Activated CD8-positive, alpha-beta T cell treated with anti-CD3 and anti-CD28 coated beads for 36 hours (primary cell): ENCODE measurements at regions of chr17 and their contacts with region 1.

Region 1: GRCh38 chr17:5065227-5065744 is 13.0 kb upstream of the ZFP3 start:
- DNase-seq: no peak
- ATAC-seq: no peak
- H3K4me3 Mint-ChIP-seq: no peak overlapping the region
- H3K27ac Mint-ChIP-seq: no peak overlapping the region
- H3K4me1 Mint-ChIP-seq: peaks cover 4% of the 10 kb centered on the region
- H3K27me3 Mint-ChIP-seq: no peaks in the 10 kb centered on the region
- CTCF ChIP-seq: no peak

Region 2: GRCh38 chr17:4903051-4903818 is 162.1 kb before region 1 on chr17 and contains the start of gene CHRNE:
- CTCF ChIA-PET with region 1: interaction called, 3 read pairs
- POLR2A ChIA-PET with region 1: no interaction called
- intact Hi-C with region 1: loop called (anchors 10 kb)
- DNase-seq: peak; percentile 91
- ATAC-seq: peak; percentile 52
- H3K4me3 Mint-ChIP-seq: peak within 1 kb of the TSS; percentile 34
- H3K27ac Mint-ChIP-seq: peak within 1 kb of the TSS; percentile 75
- H3K4me1 Mint-ChIP-seq: peaks cover 34% of the 10 kb centered on the region
- H3K27me3 Mint-ChIP-seq: no peaks in the 10 kb centered on the region
- CTCF ChIP-seq: peak; percentile 95
- total RNA-seq, gene CHRNE: 0.45 to 0.78 TPM

Region 3: DNA sequence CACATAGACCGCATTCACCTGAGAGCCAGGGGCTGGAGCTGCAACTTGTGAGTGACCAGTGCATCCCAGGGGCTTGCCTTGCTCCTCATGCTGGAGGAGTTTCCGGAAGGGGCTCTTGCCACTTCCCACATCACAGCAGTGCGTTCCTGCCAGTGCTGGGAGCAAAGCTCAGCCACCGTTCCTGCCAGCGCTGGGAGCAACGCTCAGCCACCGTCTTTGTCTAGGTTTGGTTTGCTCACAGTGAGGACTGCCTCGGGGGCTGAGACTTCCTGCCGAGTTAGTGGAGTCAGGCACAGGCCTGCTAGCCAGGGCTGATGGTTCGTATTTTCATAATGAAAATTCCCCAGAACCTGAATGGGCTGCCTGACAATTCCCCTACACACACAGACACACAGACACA is 157.0 kb before region 1 on chr17:
- CTCF ChIA-PET with region 1: interaction called, 11 read pairs
- POLR2A ChIA-PET with region 1: no interaction called
- intact Hi-C with region 1: loop called (anchors 10 kb)
- DNase-seq: peak; percentile 31
- ATAC-seq: peak; percentile 11
- H3K4me3 Mint-ChIP-seq: no peak overlapping the region
- H3K27ac Mint-ChIP-seq: no peak overlapping the region
- H3K4me1 Mint-ChIP-seq: peaks cover 12% of the 10 kb centered on the region
- H3K27me3 Mint-ChIP-seq: no peaks in the 10 kb centered on the region
- CTCF ChIP-seq: no peak

Region 4: GRCh38 chr17:4928881-4929280 is 136.4 kb before region 1 on chr17:
- CTCF ChIA-PET with region 1: no interaction called
- POLR2A ChIA-PET with region 1: no interaction called
- intact Hi-C with region 1: no loop called
- DNase-seq: no peak
- ATAC-seq: no peak
- H3K4me3 Mint-ChIP-seq: no peak overlapping the region
- H3K27ac Mint-ChIP-seq: no peak overlapping the region
- H3K4me1 Mint-ChIP-seq: peaks cover 4% of the 10 kb centered on the region
- H3K27me3 Mint-ChIP-seq: no peaks in the 10 kb centered on the region
- CTCF ChIP-seq: no peak

Region 5: GRCh38 chr17:4980644-4981216 is 84.6 kb before region 1 on chr17:
- CTCF ChIA-PET with region 1: interaction called, 33 read pairs
- POLR2A ChIA-PET with region 1: interaction called, 5 read pairs
- intact Hi-C with region 1: loop called (anchors 5 kb)
- DNase-seq: peak; percentile 62
- ATAC-seq: peak; percentile 95
- H3K4me3 Mint-ChIP-seq: no peak overlapping the region
- H3K27ac Mint-ChIP-seq: peak overlapping the region; percentile 64
- H3K4me1 Mint-ChIP-seq: peaks cover 17% of the 10 kb centered on the region
- H3K27me3 Mint-ChIP-seq: no peaks in the 10 kb centered on the region
- CTCF ChIP-seq: peak; percentile 89

Region 6: GRCh38 chr17:5031365-5032082 is 33.8 kb before region 1 on chr17:
- CTCF ChIA-PET with region 1: interaction called, 75 read pairs
- POLR2A ChIA-PET with region 1: no interaction called
- intact Hi-C with region 1: no loop called
- DNase-seq: peak; percentile 93
- ATAC-seq: peak; percentile 86
- H3K4me3 Mint-ChIP-seq: peak overlapping the region; percentile 66
- H3K27ac Mint-ChIP-seq: peak overlapping the region; percentile 83
- H3K4me1 Mint-ChIP-seq: peaks cover 16% of the 10 kb centered on the region
- H3K27me3 Mint-ChIP-seq: no peaks in the 10 kb centered on the region
- CTCF ChIP-seq: peak; percentile 83

Region 7: DNA sequence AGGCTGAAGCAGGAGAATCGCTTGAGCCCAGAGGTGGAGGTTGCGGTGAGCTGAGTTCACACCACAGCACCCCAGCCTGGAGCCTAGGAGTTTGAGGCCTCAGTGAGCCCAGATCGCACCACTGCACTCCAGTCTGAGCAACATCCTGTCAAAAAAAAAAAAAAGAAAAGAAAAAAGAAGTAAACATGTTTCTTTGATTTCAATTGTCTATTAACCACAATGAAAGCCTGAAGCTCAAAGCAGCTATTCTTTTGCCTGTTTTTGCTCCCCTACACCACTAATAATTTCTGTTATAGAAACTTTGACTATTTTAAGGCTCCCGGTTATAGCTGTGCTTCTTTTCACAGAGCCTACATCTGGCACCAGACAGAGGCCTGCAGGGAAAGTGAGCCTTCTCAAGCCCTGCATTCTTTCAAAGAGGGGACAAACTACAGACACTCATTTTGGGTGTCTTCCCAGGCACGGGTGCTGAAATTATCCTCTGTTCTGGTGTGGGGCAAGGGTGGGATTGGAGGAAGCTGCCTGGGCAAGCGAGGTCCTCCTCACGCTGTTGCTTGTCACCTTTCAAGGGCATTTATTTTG is 15.9 kb before region 1 on chr17:
- CTCF ChIA-PET with region 1: interaction called, 19 read pairs
- POLR2A ChIA-PET with region 1: interaction called, 3 read pairs
- intact Hi-C with region 1: no loop called
- DNase-seq: peak; percentile 69
- ATAC-seq: peak; percentile 84
- H3K4me3 Mint-ChIP-seq: no peak overlapping the region
- H3K27ac Mint-ChIP-seq: peak overlapping the region; percentile 79
- H3K4me1 Mint-ChIP-seq: peaks cover 32% of the 10 kb centered on the region
- H3K27me3 Mint-ChIP-seq: no peaks in the 10 kb centered on the region
- CTCF ChIP-seq: no peak

Region 8: GRCh38 chr17:5078106-5079028 is 13.1 kb after region 1 on chr17 and contains the start of gene ZFP3:
- CTCF ChIA-PET with region 1: interaction called, 11 read pairs
- POLR2A ChIA-PET with region 1: no interaction called
- intact Hi-C with region 1: no loop called
- DNase-seq: peak; percentile 89
- ATAC-seq: peak; percentile 87
- H3K4me3 Mint-ChIP-seq: peak within 1 kb of the TSS; percentile 73
- H3K27ac Mint-ChIP-seq: peak within 1 kb of the TSS; percentile 85
- H3K4me1 Mint-ChIP-seq: peaks cover 28% of the 10 kb centered on the region
- H3K27me3 Mint-ChIP-seq: no peaks in the 10 kb centered on the region
- CTCF ChIP-seq: no peak
- total RNA-seq, gene ZFP3: 1.5 to 1.9 TPM